ENCODE measurements at regions of chr17 and their contacts with region 1.

Region 1: DNA sequence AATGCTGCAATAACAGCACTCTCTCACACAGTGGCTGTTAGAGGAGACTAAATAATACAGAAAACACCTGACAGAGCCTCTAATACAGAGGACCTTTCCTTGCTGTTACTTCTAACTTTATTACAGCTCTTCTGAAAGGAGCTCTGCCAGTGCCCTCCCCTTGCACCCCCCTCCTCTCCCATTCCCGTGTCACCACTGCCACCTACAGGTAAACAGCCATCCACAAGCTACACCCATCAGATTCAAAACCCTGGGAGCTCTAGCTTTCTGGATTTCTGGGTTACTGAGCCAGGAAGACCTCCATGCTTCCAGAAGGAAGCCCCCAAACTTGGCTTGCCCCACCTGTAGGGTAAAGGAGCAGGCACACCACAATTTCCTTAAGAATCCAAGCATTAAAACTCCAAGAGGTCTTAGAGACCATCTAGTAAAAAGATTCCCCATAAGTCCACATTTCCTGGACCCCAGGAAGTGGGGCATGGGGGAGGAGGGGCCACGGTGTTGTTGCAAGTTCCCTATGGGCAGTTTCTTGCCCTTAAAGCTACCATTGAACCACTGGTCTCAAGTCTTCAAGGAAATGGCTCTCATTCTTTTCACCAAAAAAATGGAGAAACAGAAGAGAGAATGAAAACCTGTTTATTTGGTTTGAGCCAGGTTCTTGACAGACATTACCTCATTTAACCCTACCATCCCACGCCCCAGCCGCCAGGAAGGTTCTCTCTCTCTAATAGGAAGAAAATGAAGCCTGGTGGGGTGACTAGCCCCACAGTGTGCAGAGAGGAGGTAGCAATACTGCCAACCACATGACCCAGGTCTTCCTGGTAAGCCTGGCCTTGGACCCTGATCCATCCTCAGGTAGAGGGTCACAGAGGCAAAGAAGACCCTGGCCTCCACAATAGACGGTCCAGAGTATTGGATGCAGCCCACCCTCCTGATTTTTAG is 52.8 kb downstream of the TOM1L2 start:
- DNase-seq: peak; percentile 81
- ATAC-seq: peak; percentile 71
- H3K4me3 Mint-ChIP-seq: no peak overlapping the region
- H3K27ac Mint-ChIP-seq: peak overlapping the region; percentile 44; the same call in 1 of the 2 replicates
- H3K4me1 Mint-ChIP-seq: peaks cover 32% of the 10 kb centered on the region
- H3K27me3 Mint-ChIP-seq: no peaks in the 10 kb centered on the region
- CTCF ChIP-seq: peak; percentile 45

Region 2: DNA sequence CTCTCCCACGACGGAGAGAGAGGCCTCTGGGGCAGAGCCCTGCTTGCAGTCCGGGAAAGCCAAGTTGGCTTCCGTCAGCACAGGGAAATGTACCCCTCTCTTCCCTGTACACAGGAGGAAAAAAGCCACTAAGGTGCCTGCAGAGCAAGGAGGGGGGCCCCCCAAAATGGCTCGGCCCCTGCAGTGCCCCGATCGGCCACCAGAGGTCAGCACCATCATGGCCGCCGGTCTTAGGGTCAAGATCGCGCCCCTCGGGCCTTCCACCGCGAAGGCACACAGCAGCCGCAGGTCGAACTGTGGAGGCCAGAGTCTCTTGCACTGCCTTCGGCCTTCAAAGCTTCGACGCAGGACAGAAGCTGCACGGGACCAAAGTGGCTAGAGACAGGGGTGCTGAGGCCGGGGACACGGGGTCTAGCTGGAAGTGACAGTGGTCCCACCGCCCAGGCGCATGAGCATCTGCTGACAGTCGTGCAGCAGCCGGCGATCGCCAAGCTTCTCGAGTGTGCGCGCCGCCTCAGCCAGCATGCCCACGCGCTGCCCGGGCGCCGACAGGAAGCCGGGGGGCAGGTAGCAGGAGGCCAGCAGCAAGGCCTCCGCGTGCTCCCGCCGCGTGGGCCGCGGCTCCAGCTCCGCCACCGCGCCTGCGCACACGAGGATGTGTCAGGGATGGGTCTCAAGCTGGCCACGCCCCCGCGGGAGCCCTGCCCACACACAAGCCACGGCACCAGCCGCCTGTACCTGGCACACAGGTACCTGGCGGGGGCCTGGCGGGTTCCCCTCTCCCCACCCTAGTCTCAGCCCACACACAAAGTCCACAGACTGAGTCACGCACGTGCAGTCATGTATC is 107.0 kb before region 1 on chr17:
- CTCF ChIA-PET with region 1: interaction called, 49 read pairs
- POLR2A ChIA-PET with region 1: interaction called, 3 read pairs
- DNase-seq: peak; percentile 93
- ATAC-seq: peak; percentile 29
- H3K4me3 Mint-ChIP-seq: peak overlapping the region; percentile 33
- H3K27ac Mint-ChIP-seq: peak overlapping the region; percentile 94; the same call in 1 of the 2 replicates
- H3K4me1 Mint-ChIP-seq: peaks cover 22% of the 10 kb centered on the region
- H3K27me3 Mint-ChIP-seq: peaks cover 16% of the 10 kb centered on the region
- CTCF ChIP-seq: peak; percentile 100

Region 3: GRCh38 chr17:17859909-17860765 is 59.3 kb before region 1 on chr17:
- CTCF ChIA-PET with region 1: interaction called, 32 read pairs
- POLR2A ChIA-PET with region 1: interaction called, 4 read pairs
- DNase-seq: peak; percentile 75
- ATAC-seq: peak; percentile 93
- H3K4me3 Mint-ChIP-seq: no peak overlapping the region
- H3K27ac Mint-ChIP-seq: no peak overlapping the region
- H3K4me1 Mint-ChIP-seq: peaks cover 11% of the 10 kb centered on the region
- H3K27me3 Mint-ChIP-seq: no peaks in the 10 kb centered on the region
- CTCF ChIP-seq: peak; percentile 94

Region 4: GRCh38 chr17:17877529-17878358 is 41.7 kb before region 1 on chr17:
- CTCF ChIA-PET with region 1: interaction called, 18 read pairs
- POLR2A ChIA-PET with region 1: no interaction called
- DNase-seq: peak; percentile 52
- ATAC-seq: peak; percentile 65
- H3K4me3 Mint-ChIP-seq: no peak overlapping the region; the same call in 1 of the 2 replicates
- H3K27ac Mint-ChIP-seq: peak overlapping the region; percentile 77
- H3K4me1 Mint-ChIP-seq: peaks cover 41% of the 10 kb centered on the region
- H3K27me3 Mint-ChIP-seq: no peaks in the 10 kb centered on the region; the same call in 1 of the 2 replicates
- CTCF ChIP-seq: no peak

Region 5: GRCh38 chr17:17900615-17901520 is 18.6 kb before region 1 on chr17:
- CTCF ChIA-PET with region 1: interaction called, 12 read pairs
- POLR2A ChIA-PET with region 1: no interaction called
- DNase-seq: no peak
- ATAC-seq: no peak
- H3K4me3 Mint-ChIP-seq: no peak overlapping the region
- H3K27ac Mint-ChIP-seq: no peak overlapping the region
- H3K4me1 Mint-ChIP-seq: peaks cover 8% of the 10 kb centered on the region
- H3K27me3 Mint-ChIP-seq: no peaks in the 10 kb centered on the region
- CTCF ChIP-seq: no peak

Region 6: GRCh38 chr17:17942846-17943245 is 23.4 kb after region 1 on chr17:
- CTCF ChIA-PET with region 1: interaction called, 11 read pairs
- POLR2A ChIA-PET with region 1: no interaction called
- DNase-seq: no peak
- ATAC-seq: no peak
- H3K4me3 Mint-ChIP-seq: no peak overlapping the region
- H3K27ac Mint-ChIP-seq: peak overlapping the region; percentile 43
- H3K4me1 Mint-ChIP-seq: peaks cover 30% of the 10 kb centered on the region
- H3K27me3 Mint-ChIP-seq: no peaks in the 10 kb centered on the region
- CTCF ChIP-seq: no peak

Region 7: GRCh38 chr17:17972126-17972951 is 52.9 kb after region 1 on chr17 and contains the starts of genes DRC3 and TOM1L2:
- CTCF ChIA-PET with region 1: interaction called, 18 read pairs
- POLR2A ChIA-PET with region 1: no interaction called
- DNase-seq: peak; percentile 100
- ATAC-seq: peak; percentile 97
- H3K4me3 Mint-ChIP-seq: peak within 1 kb of the TSS; percentile 91
- H3K27ac Mint-ChIP-seq: no peak within 1 kb of the TSS; the same call in 1 of the 2 replicates
- H3K4me1 Mint-ChIP-seq: 0 out of 2 replicates have a peak, but pooled peaks cover 6% of the 10 kb centered on the region
- H3K27me3 Mint-ChIP-seq: no peaks in the 10 kb centered on the region; the same call in 1 of the 2 replicates
- CTCF ChIP-seq: no peak
- total RNA-seq, gene DRC3: 0.34 to 0.48 TPM (median 0.42 TPM) in 3 replicates
- total RNA-seq, gene TOM1L2: 5.2 to 6.7 TPM (median 6.4 TPM) in 3 replicates

Region 8: DNA sequence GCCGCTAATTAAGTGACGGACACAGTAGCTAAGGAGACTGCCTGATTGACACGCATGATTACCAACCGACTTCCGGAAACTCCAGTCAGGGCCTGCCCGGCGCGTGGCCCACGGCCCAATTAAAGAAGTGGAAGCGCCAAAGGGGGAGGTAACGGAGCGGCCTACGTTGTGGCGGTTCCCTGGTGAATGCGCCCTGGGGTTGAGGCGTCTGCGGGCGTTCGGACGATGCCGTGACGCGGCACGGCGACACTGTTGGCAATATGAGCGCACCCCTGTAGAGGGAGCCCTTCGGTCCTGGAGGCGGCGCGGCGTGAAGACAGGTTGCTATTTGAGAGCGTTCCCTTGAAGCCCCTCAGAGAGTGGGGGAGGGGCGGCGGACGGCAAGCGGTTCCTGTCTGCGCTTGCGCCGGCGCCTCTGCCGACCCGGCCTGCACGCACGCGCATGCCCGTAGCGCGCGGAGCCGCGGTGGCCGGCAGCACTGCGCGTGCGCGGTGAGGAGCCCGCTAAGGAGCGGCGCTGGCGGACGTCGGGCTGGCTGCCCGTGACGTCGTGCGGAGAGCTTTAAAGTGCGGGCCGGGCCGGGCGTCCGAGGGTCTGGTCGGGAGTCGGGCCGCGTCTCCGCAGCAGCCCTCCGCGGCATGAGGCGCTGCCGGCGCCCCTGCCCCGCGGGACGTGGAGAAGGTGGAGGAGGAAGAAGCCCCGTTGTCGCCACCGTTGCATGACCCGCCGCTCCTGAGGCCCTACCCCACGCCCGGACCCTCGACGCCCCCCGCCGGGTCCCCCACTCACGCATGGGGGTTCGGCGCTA is 264.1 kb after region 1 on chr17 and contains the start of gene ALKBH5:
- CTCF ChIA-PET with region 1: no interaction called
- POLR2A ChIA-PET with region 1: no interaction called
- DNase-seq: peak; percentile 95
- ATAC-seq: peak; percentile 91
- H3K4me3 Mint-ChIP-seq: peak within 1 kb of the TSS; percentile 93
- H3K27ac Mint-ChIP-seq: peak within 1 kb of the TSS; percentile 99
- H3K4me1 Mint-ChIP-seq: peaks cover 45% of the 10 kb centered on the region
- H3K27me3 Mint-ChIP-seq: no peaks in the 10 kb centered on the region
- CTCF ChIP-seq: peak; percentile 18; the same call in 1 of the 2 replicates
- total RNA-seq, gene ALKBH5: 105 to 115 TPM (median 111 TPM) in 3 replicates

Measured in WTC11 (cell line).